Cardiac septum (tissue), 1 donor: ENCODE measurements at regions of chr21 and their contacts with region 1.

Region 1: GRCh38 chr21:38805328-38806152 is at the start of gene ETS2:
- DNase-seq: peak; percentile 98
- total RNA-seq, gene ETS2: 36.4 TPM

Region 2: DNA sequence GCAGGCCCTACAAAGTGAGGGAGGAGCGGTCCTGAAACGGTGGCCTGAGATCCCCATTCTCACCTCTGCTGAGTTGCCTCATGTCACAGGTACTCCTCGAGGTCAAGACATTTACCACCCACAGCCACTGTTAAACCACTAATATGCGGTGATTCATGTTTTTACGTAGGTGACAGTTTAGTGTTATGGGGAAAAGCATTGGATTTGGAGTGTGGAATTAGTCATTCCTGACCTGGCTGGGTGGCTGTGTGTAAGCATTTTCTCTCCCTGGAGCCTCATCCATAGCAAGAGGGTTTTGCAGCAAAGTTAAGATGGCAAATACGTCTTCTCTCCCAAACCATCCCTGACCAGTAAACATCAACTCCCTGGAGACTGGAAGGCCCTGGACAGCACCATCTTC is 831.5 kb before region 1 on chr21:
- intact Hi-C with region 1: no loop called
- DNase-seq: no peak

Region 3: GRCh38 chr21:38733973-38734546 is 71.5 kb before region 1 on chr21:
- intact Hi-C with region 1: loop called (anchors 2 kb)
- DNase-seq: peak; percentile 95

Region 4: GRCh38 chr21:38925923-38926322 is 120.4 kb after region 1 on chr21:
- intact Hi-C with region 1: no loop called
- DNase-seq: peak; percentile 87

Region 5: DNA sequence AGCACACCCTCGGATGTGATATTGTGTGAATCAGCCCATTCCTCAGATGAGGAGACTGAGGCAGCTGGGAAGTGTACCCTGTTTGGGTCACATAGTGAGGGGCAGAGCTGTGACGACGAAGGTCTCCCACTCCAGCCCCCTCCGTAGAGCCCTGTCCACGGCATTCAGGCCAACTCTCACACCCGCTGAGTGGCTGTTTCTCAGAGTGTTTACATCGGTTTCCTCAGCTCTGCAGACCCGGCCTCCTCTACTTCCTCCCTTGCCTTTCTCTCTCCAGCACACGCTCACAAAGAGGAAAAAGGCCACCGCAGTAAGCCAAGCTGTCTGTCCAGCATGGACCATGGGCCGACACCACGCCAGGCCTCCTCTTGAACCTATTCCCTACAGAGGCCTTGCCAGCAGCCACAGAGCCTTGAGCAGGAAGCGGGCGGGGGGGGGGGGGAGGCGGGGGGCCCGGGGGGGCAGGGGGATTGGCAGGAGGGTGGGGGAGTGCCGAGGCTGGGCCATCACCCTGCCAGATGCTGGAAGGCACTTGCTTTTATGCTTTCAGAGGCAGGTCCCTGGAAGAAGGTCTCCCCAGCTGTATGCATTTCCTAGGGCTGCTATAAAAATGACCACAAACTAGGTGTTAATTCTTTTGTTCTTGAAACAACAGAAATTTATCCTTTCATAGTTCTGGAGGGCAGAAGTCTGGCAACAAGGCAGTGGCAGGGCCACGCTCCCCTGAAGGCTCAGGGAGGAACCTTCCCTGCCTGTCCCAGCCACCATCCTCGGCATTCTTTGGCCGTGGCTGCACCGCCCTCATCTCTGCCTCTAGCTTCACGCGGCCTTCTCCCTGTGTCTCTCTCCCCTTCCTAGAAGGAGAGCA is 199.3 kb after region 1 on chr21:
- intact Hi-C with region 1: loop called (anchors 5 kb)
- DNase-seq: peak; percentile 88

Region 6: GRCh38 chr21:39083377-39084008 is 278.0 kb after region 1 on chr21:
- intact Hi-C with region 1: loop called (anchors 2 kb)
- DNase-seq: no peak